CD4-positive, alpha-beta memory T cell (primary cell): ENCODE measurements at regions of chr22 and their contacts with region 1.

Region 1: GRCh38 chr22:45318168-45318557 is 8.4 kb downstream of the FAM118A start:
- DNase-seq: peak; percentile 93 to 97 (median 96)
- H3K4me3 ChIP-seq: peak overlapping the region in 1 of 2 donors; percentile 49
- H3K4me3 Mint-ChIP-seq: peak overlapping the region; percentile 81 to 89 (median 83)
- H3K27ac ChIP-seq: peak overlapping the region; percentile 94
- H3K27ac Mint-ChIP-seq: peak overlapping the region; percentile 96 to 100 (median 99)
- H3K4me1 ChIP-seq: peaks cover 75% of the 10 kb centered on the region
- H3K4me1 Mint-ChIP-seq: peaks cover 36 to 92% (median 73%) of the 10 kb centered on the region in 4 donors
- H3K27me3 ChIP-seq: no peaks in the 10 kb centered on the region
- H3K27me3 Mint-ChIP-seq: no peaks in the 10 kb centered on the region

Region 2: DNA sequence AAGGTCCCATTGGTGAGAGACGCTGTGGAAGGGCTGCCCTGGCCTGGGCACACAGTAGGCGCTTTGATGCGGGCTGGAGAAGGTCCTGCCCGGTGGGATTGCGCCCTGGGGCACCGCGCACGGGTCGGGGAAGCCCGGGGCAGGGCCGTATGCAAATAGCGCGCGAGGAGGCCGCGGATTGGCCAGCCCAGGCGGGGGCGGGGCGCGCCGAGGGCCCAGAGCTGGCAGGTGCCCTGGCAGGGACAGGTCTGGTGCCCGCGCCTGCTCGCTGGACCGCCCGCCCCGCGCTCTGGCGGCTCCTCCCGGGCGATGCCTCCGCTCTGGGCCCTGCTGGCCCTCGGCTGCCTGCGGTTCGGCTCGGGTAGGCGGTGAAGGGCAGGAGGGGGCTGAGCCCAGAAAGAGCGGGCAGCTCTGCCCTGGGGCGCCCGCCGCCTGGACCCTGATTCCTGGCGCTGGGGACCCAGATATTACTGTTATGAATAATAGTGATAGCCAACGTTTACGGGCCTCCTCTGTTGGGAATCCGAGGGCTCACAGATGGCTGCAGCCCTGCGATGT is 33.4 kb before region 1 on chr22 and contains the start of gene UPK3A:
- CTCF ChIA-PET with region 1: no interaction called
- POLR2A ChIA-PET with region 1: interaction called, 3 read pairs
- intact Hi-C with region 1: loop called (anchors 5 kb)
- DNase-seq: peak; percentile 38 to 51 (median 47)
- H3K4me3 ChIP-seq: no peak within 1 kb of the TSS
- H3K4me3 Mint-ChIP-seq: peak within 1 kb of the TSS in 6 of 8 donors; percentile 6 to 67 (median 36)
- H3K27ac ChIP-seq: no peak within 1 kb of the TSS
- H3K27ac Mint-ChIP-seq: no peak within 1 kb of the TSS
- H3K4me1 ChIP-seq: peaks cover 10% of the 10 kb centered on the region
- H3K4me1 Mint-ChIP-seq: peaks cover 0 to 10% (median 3%) of the 10 kb centered on the region in 4 donors
- H3K27me3 ChIP-seq: peaks cover 3% of the 10 kb centered on the region
- H3K27me3 Mint-ChIP-seq: peaks cover 2 to 9% of the 10 kb centered on the region in 2 donors
- total RNA-seq, gene UPK3A: not detected

Region 3: DNA sequence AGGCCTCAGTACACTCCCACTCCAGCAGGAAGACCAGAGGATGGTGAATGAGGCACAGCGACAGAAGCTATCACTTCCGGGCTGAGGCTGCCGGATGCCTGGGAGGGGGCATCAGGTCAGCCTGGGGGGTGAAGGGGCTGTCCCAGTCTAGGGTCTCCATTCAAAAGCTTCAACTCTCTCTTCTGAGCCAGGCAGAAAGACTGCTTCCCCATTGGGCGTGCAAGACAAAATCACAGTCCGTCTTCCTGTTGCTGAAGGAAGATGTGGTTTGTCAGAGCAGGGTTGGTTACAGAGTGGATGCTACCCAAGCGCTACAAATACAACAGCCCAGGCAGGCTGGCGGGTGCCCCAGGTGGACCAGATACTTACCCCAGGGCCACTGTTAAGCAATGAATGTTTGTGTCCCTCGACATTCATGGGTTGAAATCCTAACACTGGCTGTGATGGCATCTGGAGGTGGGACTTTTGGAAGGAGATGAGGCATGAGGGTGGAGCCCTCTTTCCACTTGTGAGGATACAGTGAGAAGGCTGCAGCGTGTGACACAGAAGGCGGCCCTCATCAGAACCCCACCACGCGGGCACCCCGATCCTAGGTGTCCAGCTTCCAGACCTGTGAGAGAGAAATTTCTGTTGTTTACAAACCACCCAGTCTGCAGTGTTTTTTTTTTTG is 21.4 kb before region 1 on chr22:
- CTCF ChIA-PET with region 1: interaction called, 5 read pairs
- POLR2A ChIA-PET with region 1: interaction called, 27 read pairs
- intact Hi-C with region 1: loop called (anchors 1 kb)
- DNase-seq: peak in 4 of 5 donors; percentile 56 to 66 (median 64)
- H3K4me3 ChIP-seq: peak overlapping the region in 1 of 2 donors; percentile 33
- H3K4me3 Mint-ChIP-seq: peak overlapping the region in 7 of 8 donors; percentile 37 to 74 (median 49)
- H3K27ac ChIP-seq: peak overlapping the region; percentile 57
- H3K27ac Mint-ChIP-seq: peak overlapping the region; percentile 80 to 94 (median 91)
- H3K4me1 ChIP-seq: peaks cover 21% of the 10 kb centered on the region
- H3K4me1 Mint-ChIP-seq: peaks cover 10 to 25% (median 12%) of the 10 kb centered on the region in 4 donors
- H3K27me3 ChIP-seq: no peaks in the 10 kb centered on the region
- H3K27me3 Mint-ChIP-seq: no peaks in the 10 kb centered on the region

Region 4: DNA sequence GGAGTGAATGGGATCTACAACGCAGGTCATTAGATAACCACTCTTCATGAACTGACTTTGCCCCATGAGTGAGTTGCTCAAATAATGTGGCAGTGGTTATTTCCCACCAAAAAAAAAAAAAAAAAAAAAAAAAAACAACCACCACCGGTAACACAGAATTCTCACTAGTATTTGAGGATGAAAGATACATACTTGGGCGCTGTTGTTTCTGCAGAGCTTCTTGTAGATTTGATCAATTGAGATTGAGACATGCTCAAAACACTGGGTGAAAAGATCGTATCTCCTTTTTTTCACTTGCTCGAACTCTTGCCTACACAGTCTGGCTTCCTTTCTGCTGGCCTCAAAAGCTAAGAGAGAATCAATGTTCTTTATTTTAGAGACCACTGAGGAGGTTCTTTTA is 35.6 kb after region 1 on chr22:
- CTCF ChIA-PET with region 1: no interaction called
- POLR2A ChIA-PET with region 1: no interaction called
- intact Hi-C with region 1: no loop called
- DNase-seq: peak in 1 of 5 donors; percentile 4
- H3K4me3 ChIP-seq: no peak overlapping the region
- H3K4me3 Mint-ChIP-seq: no peak overlapping the region
- H3K27ac ChIP-seq: no peak overlapping the region
- H3K27ac Mint-ChIP-seq: peak overlapping the region in 2 of 7 donors; percentile 44 to 64
- H3K4me1 ChIP-seq: no peaks in the 10 kb centered on the region
- H3K4me1 Mint-ChIP-seq: peaks cover 0 to 9% (median 2%) of the 10 kb centered on the region in 4 donors
- H3K27me3 ChIP-seq: no peaks in the 10 kb centered on the region
- H3K27me3 Mint-ChIP-seq: no peaks in the 10 kb centered on the region

Region 5: GRCh38 chr22:45413368-45414211 is 95.4 kb after region 1 on chr22 and contains the starts of genes RIBC2 and SMC1B:
- CTCF ChIA-PET with region 1: no interaction called
- POLR2A ChIA-PET with region 1: no interaction called
- intact Hi-C with region 1: loop called (anchors 1 kb)
- DNase-seq: peak; percentile 71 to 89 (median 86)
- H3K4me3 ChIP-seq: peak within 1 kb of the TSS in 1 of 2 donors; percentile 68
- H3K4me3 Mint-ChIP-seq: peak within 1 kb of the TSS; percentile 59 to 88 (median 82)
- H3K27ac ChIP-seq: peak within 1 kb of the TSS; percentile 35
- H3K27ac Mint-ChIP-seq: peak within 1 kb of the TSS; percentile 68 to 94 (median 87)
- H3K4me1 ChIP-seq: peaks cover 14% of the 10 kb centered on the region
- H3K4me1 Mint-ChIP-seq: peaks cover 4 to 7% (median 6%) of the 10 kb centered on the region in 4 donors
- H3K27me3 ChIP-seq: no peaks in the 10 kb centered on the region
- H3K27me3 Mint-ChIP-seq: no peaks in the 10 kb centered on the region
- total RNA-seq, gene RIBC2: not detected
- total RNA-seq, gene SMC1B: 0.08 TPM in 1 of 2 experiments, not detected in the other